Endothelial cell of umbilical vein (primary cell): ENCODE measurements at regions of chr3 and their contacts with region 1.

Region 1: GRCh38 chr3:128655531-128655930 is 4.9 kb upstream of the RPN1 start:
- DNase-seq: no peak
- H3K4me3 ChIP-seq: no peak overlapping the region
- H3K27ac ChIP-seq: no peak overlapping the region
- H3K4me1 ChIP-seq: no peaks in the 10 kb centered on the region
- H3K27me3 ChIP-seq: no peaks in the 10 kb centered on the region
- CTCF ChIP-seq: no peak
- POLR2A ChIP-seq: no peak

Region 2: DNA sequence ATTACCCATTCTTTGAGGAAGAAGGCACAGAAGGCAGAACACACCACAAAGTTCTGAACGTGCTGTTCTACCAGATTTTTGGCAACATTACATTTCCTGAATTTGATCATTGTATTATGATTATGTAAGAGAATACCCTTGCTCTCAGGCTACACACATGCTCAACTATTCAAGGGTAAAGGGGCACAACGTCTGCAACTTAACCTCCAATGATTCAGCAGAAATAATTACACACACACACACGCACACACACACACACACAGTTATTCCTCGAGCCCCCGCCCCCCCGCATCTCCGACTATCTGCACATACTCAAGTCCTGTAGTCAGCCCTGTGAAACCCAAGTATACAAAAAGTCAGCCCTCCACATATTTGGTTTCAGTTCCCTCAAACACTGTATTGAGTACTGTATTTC is 31.8 kb before region 1 on chr3:
- CTCF ChIA-PET with region 1: interaction called, 6 read pairs
- POLR2A ChIA-PET with region 1: no interaction called
- dilution Hi-C with region 1: no loop called
- intact Hi-C with region 1: loop called (anchors 1 kb)
- DNase-seq: peak; percentile 66
- H3K4me3 ChIP-seq: no peak overlapping the region
- H3K27ac ChIP-seq: no peak overlapping the region
- H3K4me1 ChIP-seq: peaks cover 46% of the 10 kb centered on the region
- H3K27me3 ChIP-seq: no peaks in the 10 kb centered on the region
- CTCF ChIP-seq: no peak
- POLR2A ChIP-seq: no peak

Region 3: DNA sequence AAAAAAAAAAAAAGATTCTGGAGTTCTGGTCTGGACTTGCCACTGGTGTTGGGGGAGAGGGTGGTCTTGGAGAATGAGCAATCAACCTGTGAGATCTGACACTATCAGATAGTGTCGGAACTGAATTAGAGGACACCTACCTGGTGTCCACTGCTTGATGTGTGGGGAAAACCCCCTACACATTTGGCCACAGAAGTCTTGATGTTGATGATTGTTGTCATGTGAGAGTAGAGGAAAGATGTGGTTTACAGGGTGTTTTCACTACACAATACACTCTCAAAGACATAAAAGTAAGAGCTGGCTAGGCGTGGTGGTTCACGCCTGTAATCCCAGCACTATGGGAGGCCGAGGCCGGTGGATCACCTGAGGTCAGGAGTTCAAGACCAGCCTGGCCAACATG is 33.5 kb after region 1 on chr3:
- CTCF ChIA-PET with region 1: no interaction called
- POLR2A ChIA-PET with region 1: no interaction called
- dilution Hi-C with region 1: no loop called
- intact Hi-C with region 1: no loop called
- DNase-seq: no peak
- H3K4me3 ChIP-seq: no peak overlapping the region
- H3K27ac ChIP-seq: no peak overlapping the region
- H3K4me1 ChIP-seq: no peaks in the 10 kb centered on the region
- H3K27me3 ChIP-seq: peaks cover 0 to 3% of the 10 kb centered on the region in 2 experiments
- CTCF ChIP-seq: no peak
- POLR2A ChIP-seq: no peak